ENCODE measurements at regions of chr1 and their contacts with region 1.

Region 1: GRCh38 chr1:58783993-58784757 is at the start of gene JUN:
- DNase-seq: peak; percentile 92 to 98
- ATAC-seq: peak; percentile 75 to 82
- H3K4me3 ChIP-seq: peak within 1 kb of the TSS; percentile 95
- H3K27ac ChIP-seq: peak within 1 kb of the TSS; percentile 91 to 98
- H3K4me1 ChIP-seq: peaks cover 22% of the 10 kb centered on the region
- CTCF ChIP-seq: no peak
- EP300 ChIP-seq: no peak
- POLR2A ChIP-seq: peak; percentile 100
- RAD21 ChIP-seq: 0 out of 5 replicates have a peak, but pooled peaks of 1 of the 2 experiments have one; percentile 13
- polyA plus RNA-seq, gene JUN: 32.6 and 59.8 TPM in 2 replicates

Region 2: DNA sequence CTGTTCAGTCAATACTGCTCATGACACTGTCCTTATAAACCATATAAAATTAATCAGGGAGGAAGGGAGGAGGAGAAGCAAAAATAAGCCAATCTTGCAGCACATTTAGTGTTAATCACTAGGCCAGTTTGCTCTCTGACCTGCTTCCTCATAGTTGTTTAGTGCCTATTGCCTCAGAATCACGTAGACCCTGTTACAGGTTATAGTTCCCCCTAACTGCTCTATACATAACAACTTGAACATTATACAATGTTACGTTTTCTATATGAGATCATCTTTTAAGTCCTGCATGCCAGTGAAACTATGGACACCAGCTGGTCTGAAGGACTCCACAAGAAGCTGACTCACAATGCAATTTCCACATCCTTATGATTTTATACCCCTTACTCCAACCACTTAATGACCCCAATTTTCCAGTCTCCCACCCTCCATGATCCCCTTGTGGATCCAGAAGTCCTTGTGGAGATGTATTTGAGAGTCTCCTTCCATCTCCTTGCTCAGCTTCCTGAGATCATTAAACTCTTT is 172.3 kb before region 1 on chr1:
- CTCF ChIA-PET with region 1: no interaction called
- POLR2A ChIA-PET with region 1: no interaction called
- DNase-seq: no peak
- ATAC-seq: no peak
- H3K4me3 ChIP-seq: no peak overlapping the region
- H3K27ac ChIP-seq: no peak overlapping the region
- H3K4me1 ChIP-seq: no peaks in the 10 kb centered on the region
- CTCF ChIP-seq: no peak
- EP300 ChIP-seq: no peak
- POLR2A ChIP-seq: no peak
- RAD21 ChIP-seq: no peak

Region 3: GRCh38 chr1:58718435-58718834 is 65.7 kb before region 1 on chr1:
- CTCF ChIA-PET with region 1: no interaction called
- POLR2A ChIA-PET with region 1: no interaction called
- DNase-seq: no peak
- ATAC-seq: no peak
- H3K4me3 ChIP-seq: no peak overlapping the region
- H3K27ac ChIP-seq: no peak overlapping the region
- H3K4me1 ChIP-seq: no peaks in the 10 kb centered on the region
- CTCF ChIP-seq: no peak
- EP300 ChIP-seq: no peak
- POLR2A ChIP-seq: no peak
- RAD21 ChIP-seq: no peak

Region 4: DNA sequence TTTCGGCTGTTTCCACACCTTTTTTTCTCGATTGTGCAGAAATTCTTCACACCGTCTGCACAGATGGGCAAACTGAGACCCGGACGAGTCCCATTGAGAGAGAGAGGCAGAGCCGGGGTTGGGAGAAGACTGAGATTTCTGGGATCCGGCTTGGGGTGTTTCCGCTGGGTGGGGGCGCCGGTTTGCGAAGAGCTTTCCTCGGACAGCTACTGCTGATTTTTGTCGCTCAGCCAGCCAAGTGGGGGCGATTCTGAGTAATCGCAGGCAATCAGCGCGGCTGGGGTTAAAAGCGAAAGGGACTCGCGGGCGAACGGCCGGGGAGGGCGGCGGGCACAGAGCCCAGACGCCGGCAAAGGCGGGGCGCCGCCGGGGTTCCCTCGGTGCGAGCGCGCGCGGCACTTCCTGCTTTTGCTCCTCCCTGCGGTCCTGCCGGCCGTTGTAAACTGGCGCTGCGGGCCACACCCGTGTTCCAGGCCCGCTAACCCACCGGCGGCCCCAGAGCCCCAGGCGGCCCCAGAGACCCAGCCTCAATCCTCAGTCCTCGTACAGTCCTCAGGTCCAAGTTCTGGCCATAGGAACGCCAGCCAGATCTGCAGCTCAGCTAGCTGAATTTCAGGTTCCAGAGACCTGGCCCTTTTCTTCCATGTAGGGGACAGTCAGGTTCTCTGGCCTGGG is 32.0 kb after region 1 on chr1:
- CTCF ChIA-PET with region 1: interaction called, 4 read pairs
- POLR2A ChIA-PET with region 1: interaction called, 10 read pairs
- DNase-seq: peak; percentile 66 to 83
- ATAC-seq: peak; percentile 77 to 85
- H3K4me3 ChIP-seq: peak overlapping the region; percentile 64
- H3K27ac ChIP-seq: peak overlapping the region; percentile 100
- H3K4me1 ChIP-seq: peaks cover 41% of the 10 kb centered on the region
- CTCF ChIP-seq: no peak; the same call in 2 of the 3 replicates
- EP300 ChIP-seq: peak; percentile 21 to 57; a peak in 2 of 5 replicates
- POLR2A ChIP-seq: peak; percentile 22; the same call in 1 of the 2 replicates
- RAD21 ChIP-seq: peak; percentile 2 to 58

Region 5: DNA sequence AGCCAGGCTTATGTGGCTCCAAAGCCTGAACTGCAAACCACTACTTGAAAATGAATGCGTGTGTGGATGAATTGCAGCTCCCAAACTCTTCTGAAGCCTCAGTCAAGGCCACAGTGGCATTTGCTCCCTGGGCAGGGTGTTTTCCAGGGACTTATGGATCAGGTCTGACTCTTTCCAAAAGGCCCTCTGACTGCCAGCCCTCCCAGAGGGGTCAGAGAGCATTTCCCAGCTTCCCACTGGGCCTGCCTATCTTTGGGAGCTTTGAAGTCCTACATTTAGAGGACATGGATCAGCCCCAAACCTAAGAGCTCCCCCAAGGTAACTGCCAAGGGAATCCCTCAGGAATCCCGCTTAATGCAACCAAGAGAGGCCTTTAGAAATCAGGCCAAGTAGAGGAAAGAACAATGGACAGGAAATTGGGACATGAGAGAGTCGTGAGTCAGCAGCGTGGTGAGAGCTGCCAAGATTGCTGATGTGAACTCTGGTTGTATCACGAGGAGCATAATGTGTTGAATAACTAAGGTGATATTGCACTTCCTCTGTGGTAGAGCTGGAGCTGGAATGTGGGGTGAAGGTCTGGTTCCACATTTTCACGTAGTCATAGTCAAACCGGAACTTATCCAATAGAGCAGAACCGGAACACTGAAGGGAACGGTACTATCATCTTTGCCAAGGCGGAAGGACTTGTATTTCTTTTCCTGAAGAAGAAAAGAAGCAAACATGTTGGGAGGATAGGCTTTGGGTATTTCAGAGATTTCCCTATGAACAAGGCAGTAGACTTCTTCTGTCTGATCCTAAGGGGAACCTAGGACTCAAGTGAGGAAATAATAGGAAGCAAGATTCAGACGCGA is 99.1 kb after region 1 on chr1:
- CTCF ChIA-PET with region 1: no interaction called
- POLR2A ChIA-PET with region 1: interaction called, 11 read pairs
- DNase-seq: peak; percentile 41 to 86
- ATAC-seq: peak; percentile 68 to 73; a peak in 5 of 6 replicates
- H3K4me3 ChIP-seq: no peak overlapping the region
- H3K27ac ChIP-seq: peak overlapping the region; percentile 81 to 91
- H3K4me1 ChIP-seq: peaks cover 52% of the 10 kb centered on the region
- CTCF ChIP-seq: no peak
- EP300 ChIP-seq: peak; percentile 72 to 79; a peak in 3 of 5 replicates
- POLR2A ChIP-seq: no peak
- RAD21 ChIP-seq: peak in 1 of 2 experiments; percentile 37; a peak in 2 of 5 replicates

Region 6: DNA sequence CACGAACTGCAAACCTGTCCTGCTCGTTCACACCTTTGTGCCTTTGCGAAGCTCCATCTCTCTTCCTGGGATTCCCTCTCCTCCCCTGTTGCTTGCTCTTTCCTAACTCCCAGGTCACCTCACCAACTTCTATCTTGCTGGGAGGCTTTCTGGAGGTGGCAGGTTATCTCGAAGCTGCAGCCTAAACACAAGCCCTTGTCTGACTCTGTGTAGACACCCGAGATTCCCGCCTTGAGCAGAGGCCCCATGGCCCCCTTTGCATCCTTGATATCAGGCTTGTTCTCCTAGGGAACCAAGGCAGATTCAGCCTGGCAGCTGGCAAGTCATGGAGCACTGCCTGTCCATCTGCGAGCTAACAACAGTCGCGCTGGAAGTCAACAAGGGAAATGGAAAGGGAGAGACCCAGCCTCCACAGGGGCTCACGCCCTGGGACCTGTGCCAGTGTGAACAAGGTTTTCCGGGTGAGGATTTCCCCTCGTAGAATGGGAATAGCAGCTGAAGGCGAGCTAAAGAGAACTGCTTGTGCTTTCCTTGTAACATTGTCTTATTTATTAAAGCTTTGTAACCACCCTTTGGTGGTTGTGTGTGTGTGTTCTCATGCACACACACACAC is 109.2 kb after region 1 on chr1:
- CTCF ChIA-PET with region 1: no interaction called
- POLR2A ChIA-PET with region 1: no interaction called
- DNase-seq: no peak
- ATAC-seq: no peak
- H3K4me3 ChIP-seq: no peak overlapping the region
- H3K27ac ChIP-seq: peak overlapping the region in 1 of 2 experiments; percentile 32; a peak in 2 of 6 replicates
- H3K4me1 ChIP-seq: peaks cover 20% of the 10 kb centered on the region
- CTCF ChIP-seq: no peak
- EP300 ChIP-seq: no peak
- POLR2A ChIP-seq: no peak
- RAD21 ChIP-seq: no peak

Region 7: DNA sequence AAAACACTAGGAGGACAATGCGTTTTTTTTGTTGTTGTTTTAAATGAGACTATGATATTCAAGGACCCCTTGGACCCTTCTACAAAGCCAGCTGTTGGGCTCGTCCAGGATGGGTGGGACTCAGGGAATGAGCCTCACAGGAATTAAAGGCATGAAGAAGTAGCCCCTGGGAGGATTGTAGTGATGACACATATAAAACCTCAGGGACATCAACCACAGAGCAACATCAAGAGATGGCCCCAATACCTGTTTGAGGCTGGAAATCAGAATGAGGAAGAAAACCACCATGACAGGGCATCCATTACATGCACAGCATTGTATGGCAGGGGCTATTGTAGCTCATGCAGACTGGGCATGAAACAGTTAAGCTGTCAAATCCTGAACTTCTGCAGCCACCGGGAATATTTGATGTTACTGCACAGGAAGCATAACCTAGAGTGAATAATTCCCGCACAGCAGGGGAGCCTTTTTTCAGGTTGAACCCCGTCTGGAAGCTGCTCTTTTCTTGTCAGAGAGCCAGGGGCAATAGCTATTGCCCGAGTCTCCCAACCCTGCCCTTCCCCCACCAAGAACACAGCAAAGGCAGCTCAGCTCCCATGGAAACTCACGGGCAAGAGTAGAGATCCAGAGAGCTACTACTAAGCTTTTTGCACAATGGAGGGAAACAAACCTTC is 372.5 kb after region 1 on chr1:
- CTCF ChIA-PET with region 1: no interaction called
- POLR2A ChIA-PET with region 1: interaction called, 13 read pairs
- DNase-seq: peak; percentile 26 to 67
- ATAC-seq: peak; percentile 68 to 82
- H3K4me3 ChIP-seq: no peak overlapping the region
- H3K27ac ChIP-seq: peak overlapping the region; percentile 73 to 97
- H3K4me1 ChIP-seq: peaks cover 36% of the 10 kb centered on the region
- CTCF ChIP-seq: no peak
- EP300 ChIP-seq: peak; percentile 19 to 56; a peak in 2 of 5 replicates
- POLR2A ChIP-seq: no peak
- RAD21 ChIP-seq: peak; percentile 19 to 34; a peak in 3 of 5 replicates

Region 8: DNA sequence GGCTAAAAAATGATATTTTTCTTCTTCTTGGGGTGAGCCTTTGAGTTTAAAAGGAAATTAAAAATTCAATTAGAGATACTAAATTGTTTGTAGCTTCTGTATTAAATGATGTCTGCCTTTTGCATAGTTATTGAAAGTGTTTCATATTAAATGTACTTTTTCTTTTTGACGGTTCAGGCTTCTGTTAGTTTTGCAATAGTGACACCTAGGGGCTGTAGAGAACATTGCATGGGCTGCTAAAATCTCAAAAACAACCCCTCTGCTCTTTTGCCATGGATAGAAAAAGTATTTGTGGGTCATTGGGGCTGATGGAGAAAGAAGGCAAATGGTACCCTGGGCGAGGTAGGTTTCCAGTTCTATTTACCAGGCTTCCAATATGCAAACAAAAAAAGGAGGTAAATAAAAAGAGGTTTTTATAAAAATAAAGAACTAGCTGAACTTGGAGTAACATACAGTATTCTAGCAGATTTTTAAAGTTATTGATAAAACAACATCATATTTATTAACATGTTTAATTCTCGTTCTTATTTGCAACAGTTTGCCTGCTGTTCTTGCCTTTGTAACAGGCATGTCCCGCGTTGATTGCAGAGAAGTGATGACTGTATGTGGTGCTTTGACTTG is 915.2 kb after region 1 on chr1:
- CTCF ChIA-PET with region 1: interaction called, 19 read pairs
- POLR2A ChIA-PET with region 1: interaction called, 4 read pairs
- DNase-seq: peak; percentile 18 to 30
- ATAC-seq: no peak
- H3K4me3 ChIP-seq: no peak overlapping the region
- H3K27ac ChIP-seq: no peak overlapping the region
- H3K4me1 ChIP-seq: peaks cover 6% of the 10 kb centered on the region; the same call in 1 of the 3 replicates
- CTCF ChIP-seq: peak; percentile 81
- EP300 ChIP-seq: no peak
- POLR2A ChIP-seq: no peak
- RAD21 ChIP-seq: peak; percentile 87 to 89